Breast epithelium (tissue), 4 donors: ENCODE measurements at regions of chrX and their contacts with region 1.

Region 1: GRCh38 chrX:120308959-120309872 is 2.0 kb downstream of the TMEM255A start:
- DNase-seq: peak; percentile 56 to 75
- H3K4me3 ChIP-seq: peak overlapping the region; percentile 31 to 65 (median 48)
- H3K27ac ChIP-seq: peak overlapping the region; percentile 25 to 43
- H3K4me1 ChIP-seq: no peaks in the 10 kb centered on the region
- H3K27me3 ChIP-seq: peaks cover 0 to 54% of the 10 kb centered on the region in 2 donors
- CTCF ChIP-seq: peak; percentile 23 to 60 (median 34)
- POLR2A ChIP-seq: no peak

Region 2: DNA sequence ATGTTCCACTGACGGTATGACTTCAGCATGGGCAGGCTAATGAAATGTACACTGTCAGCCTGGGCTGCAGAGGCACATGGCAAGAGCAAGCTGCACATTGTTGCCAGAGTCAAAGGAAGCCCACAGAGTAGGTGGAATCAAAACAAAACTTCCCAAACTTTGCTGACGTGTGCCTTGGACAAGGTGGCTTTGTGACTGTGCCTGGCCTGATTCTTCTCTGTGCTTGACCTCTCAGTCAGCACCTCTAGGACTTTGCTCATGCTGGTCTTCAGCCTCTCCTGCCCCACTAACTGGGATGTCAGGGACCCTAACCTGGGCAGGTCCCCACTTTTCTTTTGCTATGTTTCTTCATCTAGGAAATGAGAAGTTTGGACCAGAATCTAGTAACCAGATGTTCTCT is 1141.1 kb before region 1 on chrX:
- intact Hi-C with region 1: no loop called
- DNase-seq: no peak
- H3K4me3 ChIP-seq: no peak overlapping the region
- H3K27ac ChIP-seq: no peak overlapping the region
- H3K4me1 ChIP-seq: no peaks in the 10 kb centered on the region
- H3K27me3 ChIP-seq: no peaks in the 10 kb centered on the region
- CTCF ChIP-seq: no peak
- POLR2A ChIP-seq: no peak

Region 3: DNA sequence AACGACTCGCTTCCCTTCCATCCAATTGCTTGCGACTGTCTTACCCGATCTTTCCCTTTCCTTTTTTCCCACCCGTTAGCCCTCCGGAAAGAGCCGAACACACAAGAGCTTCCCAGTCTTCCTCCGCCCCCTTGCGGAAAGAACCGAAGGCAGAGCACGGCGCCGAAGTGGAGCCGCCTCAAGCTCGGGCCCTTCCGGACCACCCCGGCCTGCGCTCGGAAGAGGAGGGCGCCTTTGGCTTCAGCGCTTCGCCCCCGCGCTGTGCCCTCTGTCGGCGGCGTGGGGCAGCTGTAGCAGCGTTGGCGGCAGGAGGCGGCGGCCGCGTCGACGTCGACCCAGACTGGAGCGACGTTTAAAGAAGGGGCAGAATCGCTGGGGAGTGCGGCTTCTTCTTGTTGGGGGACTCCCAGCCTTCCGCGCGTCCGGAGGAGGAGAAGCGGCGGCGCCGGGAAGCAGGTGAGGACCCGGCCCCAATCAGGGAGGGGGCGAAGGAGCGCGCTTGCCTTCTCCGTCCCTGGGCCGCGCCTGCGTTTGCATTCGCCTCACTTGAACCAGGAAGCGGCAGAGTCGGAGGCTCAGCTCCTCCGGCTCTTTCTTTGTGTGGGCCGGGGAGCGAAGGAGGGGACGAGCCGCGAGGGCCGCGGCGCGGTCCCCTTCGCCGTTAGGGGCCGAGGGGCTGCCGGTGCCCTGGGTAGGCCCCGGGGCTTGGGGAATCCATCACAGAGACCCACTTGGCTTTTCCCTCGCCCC is 58.5 kb before region 1 on chrX and contains the start of gene ZBTB33:
- intact Hi-C with region 1: loop called (anchors 10 kb)
- DNase-seq: peak; percentile 82 to 85
- H3K4me3 ChIP-seq: peak within 1 kb of the TSS; percentile 68 to 78 (median 70)
- H3K27ac ChIP-seq: peak within 1 kb of the TSS; percentile 93 to 95
- H3K4me1 ChIP-seq: no peaks in the 10 kb centered on the region
- H3K27me3 ChIP-seq: no peaks in the 10 kb centered on the region
- CTCF ChIP-seq: peak; percentile 58 to 85 (median 69)
- POLR2A ChIP-seq: peak; percentile 63
- total RNA-seq, gene ZBTB33: 12.6 to 49.8 (median 18.4) TPM

Region 4: DNA sequence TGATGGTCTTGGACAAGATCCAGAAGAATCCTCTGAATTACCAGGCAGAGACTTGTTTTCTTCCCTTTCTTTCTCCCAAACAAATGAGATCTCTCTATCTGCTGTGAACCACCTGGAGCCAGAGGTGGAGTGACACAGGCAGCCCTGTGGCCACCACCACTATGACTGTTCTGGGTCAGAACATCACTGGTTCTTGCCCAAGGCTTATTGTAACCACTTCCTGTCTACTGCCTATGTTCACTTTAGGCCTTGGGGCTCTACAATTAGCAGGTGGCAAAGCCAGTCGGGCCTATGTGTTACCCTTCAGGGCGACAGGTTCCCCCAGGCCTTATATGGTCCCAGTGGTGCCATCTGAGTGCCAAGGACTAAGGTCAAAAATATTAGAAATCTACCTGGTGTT is 899.3 kb after region 1 on chrX:
- intact Hi-C with region 1: no loop called
- DNase-seq: no peak
- H3K4me3 ChIP-seq: no peak overlapping the region
- H3K27ac ChIP-seq: no peak overlapping the region
- H3K4me1 ChIP-seq: no peaks in the 10 kb centered on the region
- H3K27me3 ChIP-seq: peaks cover 0 to 9% of the 10 kb centered on the region in 2 donors
- CTCF ChIP-seq: no peak
- POLR2A ChIP-seq: no peak